H1 (cell line): ENCODE measurements at regions of chr12 and their contacts with region 1.

Region 1: GRCh38 chr12:12562585-12563261 is at the start of gene DUSP16:
- DNase-seq: peak; percentile 73 to 87
- H3K4me3 ChIP-seq: peak within 1 kb of the TSS; percentile 79 to 96 (median 87)
- H3K27ac ChIP-seq: peak within 1 kb of the TSS; percentile 80
- H3K4me1 ChIP-seq: peaks cover 4 to 13% (median 7%) of the 10 kb centered on the region in 4 experiments; a peak in 5 of 7 replicates
- H3K27me3 ChIP-seq: no peaks in the 10 kb centered on the region
- CTCF ChIP-seq: peak in 1 of 3 experiments; percentile 7; a peak in 1 of 4 replicates
- EP300 ChIP-seq: no peak
- POLR2A ChIP-seq: peak; percentile 63 to 70; a peak in 2 of 3 replicates
- RAD21 ChIP-seq: no peak
- total RNA-seq, gene DUSP16: 55.9 and 60.5 TPM in 2 replicates

Region 2: DNA sequence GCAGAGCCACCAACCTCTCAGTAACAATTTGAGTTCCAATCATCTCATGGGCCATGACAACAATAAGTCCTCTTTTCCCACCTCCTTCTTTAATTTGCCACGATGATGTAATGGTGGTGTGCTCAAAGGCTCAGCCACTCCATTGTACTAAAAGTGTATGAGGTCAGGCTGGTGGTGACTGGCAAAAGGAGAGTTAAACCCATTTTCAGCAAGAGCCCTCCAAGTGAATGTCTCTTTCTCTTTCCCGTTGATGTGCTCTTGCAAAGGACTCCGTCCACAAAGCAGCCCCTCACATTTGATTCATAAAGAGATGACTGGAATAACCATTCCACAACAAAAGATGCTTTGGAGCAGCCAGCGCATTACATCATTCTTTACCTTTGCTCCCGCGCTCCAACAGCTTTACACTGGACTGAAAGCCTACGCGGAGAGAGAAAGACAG is 41.7 kb before region 1 on chr12:
- CTCF ChIA-PET with region 1: interaction called, 10 read pairs
- POLR2A ChIA-PET with region 1: interaction called, 3 read pairs
- DNase-seq: no peak
- H3K4me3 ChIP-seq: no peak overlapping the region
- H3K27ac ChIP-seq: no peak overlapping the region
- H3K4me1 ChIP-seq: peaks cover 0 to 10% (median 8%) of the 10 kb centered on the region in 4 experiments; a peak in 4 of 7 replicates
- H3K27me3 ChIP-seq: no peaks in the 10 kb centered on the region
- CTCF ChIP-seq: no peak
- EP300 ChIP-seq: no peak
- POLR2A ChIP-seq: no peak
- RAD21 ChIP-seq: no peak

Region 3: GRCh38 chr12:12533238-12533829 is 29.4 kb before region 1 on chr12:
- CTCF ChIA-PET with region 1: interaction called, 10 read pairs
- POLR2A ChIA-PET with region 1: interaction called, 3 read pairs
- DNase-seq: no peak
- H3K4me3 ChIP-seq: no peak overlapping the region
- H3K27ac ChIP-seq: no peak overlapping the region
- H3K4me1 ChIP-seq: peaks cover 0 to 8% (median 6%) of the 10 kb centered on the region in 4 experiments; a peak in 4 of 7 replicates
- H3K27me3 ChIP-seq: no peaks in the 10 kb centered on the region
- CTCF ChIP-seq: no peak
- EP300 ChIP-seq: no peak
- POLR2A ChIP-seq: no peak
- RAD21 ChIP-seq: no peak

Region 4: GRCh38 chr12:12630850-12631249 is 68.1 kb after region 1 on chr12:
- CTCF ChIA-PET with region 1: interaction called, 11 read pairs
- POLR2A ChIA-PET with region 1: no interaction called
- DNase-seq: no peak
- H3K4me3 ChIP-seq: no peak overlapping the region
- H3K27ac ChIP-seq: no peak overlapping the region
- H3K4me1 ChIP-seq: no peaks in the 10 kb centered on the region
- H3K27me3 ChIP-seq: no peaks in the 10 kb centered on the region
- CTCF ChIP-seq: no peak
- EP300 ChIP-seq: no peak
- POLR2A ChIP-seq: no peak
- RAD21 ChIP-seq: no peak